T-cell (primary cell): ENCODE measurements at regions of chr12 and their contacts with region 1.

Region 1: GRCh38 chr12:44519931-44520330 is 356.2 kb downstream of the NELL2 start:
- DNase-seq: no peak
- ATAC-seq: no peak
- H3K4me3 ChIP-seq: no peak overlapping the region
- H3K4me3 Mint-ChIP-seq: no peak overlapping the region
- H3K27ac ChIP-seq: no peak overlapping the region
- H3K27ac Mint-ChIP-seq: peak overlapping the region in 1 of 2 donors; percentile 8
- H3K4me1 ChIP-seq: no peaks in the 10 kb centered on the region
- H3K4me1 Mint-ChIP-seq: no peaks in the 10 kb centered on the region
- H3K27me3 ChIP-seq: no peaks in the 10 kb centered on the region
- H3K27me3 Mint-ChIP-seq: no peaks in the 10 kb centered on the region

Region 2: DNA sequence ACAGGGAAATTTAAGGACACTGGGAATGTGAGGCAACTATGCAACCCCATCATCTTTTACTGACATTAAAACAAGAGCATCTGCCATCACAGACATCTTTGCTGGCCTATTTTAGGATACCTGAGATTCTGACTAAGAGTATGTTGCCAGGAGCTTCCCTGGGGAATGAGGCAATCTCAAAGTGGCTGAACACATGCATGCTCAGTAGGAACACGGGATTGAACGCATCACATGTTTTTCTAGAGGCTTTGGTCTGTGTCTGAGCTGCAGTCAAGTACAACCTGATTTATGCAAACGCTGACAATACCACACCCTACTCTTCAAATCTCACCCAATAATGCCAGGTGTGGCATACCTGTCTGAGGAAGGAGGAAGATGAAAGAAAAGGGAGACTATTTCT is 60.4 kb before region 1 on chr12:
- CTCF ChIA-PET with region 1: no interaction called
- POLR2A ChIA-PET with region 1: interaction called in 1 of 2 experiments, 12 read pairs
- DNase-seq: no peak
- ATAC-seq: no peak
- H3K4me3 ChIP-seq: no peak overlapping the region
- H3K4me3 Mint-ChIP-seq: no peak overlapping the region
- H3K27ac ChIP-seq: no peak overlapping the region
- H3K27ac Mint-ChIP-seq: no peak overlapping the region
- H3K4me1 ChIP-seq: no peaks in the 10 kb centered on the region
- H3K4me1 Mint-ChIP-seq: no peaks in the 10 kb centered on the region
- H3K27me3 ChIP-seq: peaks cover 0 to 3% of the 10 kb centered on the region in 2 experiments
- H3K27me3 Mint-ChIP-seq: peaks cover 0 to 5% of the 10 kb centered on the region in 2 donors

Region 3: GRCh38 chr12:44674875-44675274 is 154.9 kb after region 1 on chr12:
- CTCF ChIA-PET with region 1: no interaction called
- POLR2A ChIA-PET with region 1: interaction called in 1 of 2 experiments, 10 read pairs
- DNase-seq: no peak
- ATAC-seq: no peak
- H3K4me3 ChIP-seq: no peak overlapping the region
- H3K4me3 Mint-ChIP-seq: no peak overlapping the region
- H3K27ac ChIP-seq: no peak overlapping the region
- H3K27ac Mint-ChIP-seq: no peak overlapping the region
- H3K4me1 ChIP-seq: no peaks in the 10 kb centered on the region
- H3K4me1 Mint-ChIP-seq: no peaks in the 10 kb centered on the region
- H3K27me3 ChIP-seq: no peaks in the 10 kb centered on the region
- H3K27me3 Mint-ChIP-seq: no peaks in the 10 kb centered on the region